Endothelial cell of umbilical vein (primary cell): ENCODE measurements at regions of chr20 and their contacts with region 1.

Region 1: DNA sequence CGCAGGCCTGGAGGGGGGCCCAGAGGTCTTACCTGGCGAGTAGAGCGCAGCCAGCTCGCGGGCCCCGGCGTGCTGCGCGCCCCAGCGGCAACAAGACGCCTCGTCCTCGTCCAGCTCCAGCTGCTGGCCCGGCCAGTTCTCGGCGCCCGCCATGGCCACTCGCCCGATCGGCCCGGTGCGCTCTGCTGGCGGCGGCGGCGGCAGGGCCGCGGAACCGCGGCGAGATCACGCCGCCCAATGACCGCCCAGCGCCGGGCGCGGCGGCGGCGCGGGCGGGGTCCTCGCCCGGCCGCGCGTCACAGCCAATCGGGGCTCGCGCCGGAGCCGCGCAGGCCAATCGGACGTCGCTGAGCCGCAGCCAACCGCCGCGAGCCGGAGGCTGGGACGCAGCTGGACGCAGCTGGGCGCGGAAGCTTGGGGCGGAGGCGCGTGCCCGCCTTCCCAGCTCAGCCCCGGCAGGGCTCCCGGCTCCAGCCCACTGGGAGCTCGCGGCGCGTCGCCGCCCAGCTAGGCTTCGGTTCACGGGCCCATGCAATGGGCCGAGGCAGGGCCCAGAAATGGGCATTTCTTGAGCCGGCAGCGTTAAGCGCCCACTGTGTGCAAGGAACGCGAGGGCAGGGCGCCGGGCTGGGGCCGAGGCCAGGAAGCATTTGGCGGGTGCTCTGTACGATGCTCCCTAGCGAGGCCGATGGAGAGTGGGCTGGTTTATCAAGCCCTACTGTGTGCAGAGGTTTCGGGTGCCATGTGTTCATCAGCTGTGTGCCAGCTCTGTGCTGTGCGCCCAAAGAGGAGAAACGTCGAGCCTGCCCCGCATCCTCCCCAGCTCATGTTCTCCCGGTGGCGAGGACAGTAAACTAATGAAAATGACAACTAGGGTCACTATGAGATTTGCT is at the start of gene PEDS1:
- DNase-seq: peak; percentile 88
- H3K4me3 ChIP-seq: peak within 1 kb of the TSS; percentile 53 to 86 (median 80)
- H3K27ac ChIP-seq: peak within 1 kb of the TSS; percentile 77
- H3K4me1 ChIP-seq: peaks cover 39% of the 10 kb centered on the region
- H3K27me3 ChIP-seq: no peaks in the 10 kb centered on the region
- CTCF ChIP-seq: no peak
- POLR2A ChIP-seq: peak; percentile 90
- total RNA-seq, gene PEDS1: 62.7 and 71.9 TPM in 2 replicates

Region 2: DNA sequence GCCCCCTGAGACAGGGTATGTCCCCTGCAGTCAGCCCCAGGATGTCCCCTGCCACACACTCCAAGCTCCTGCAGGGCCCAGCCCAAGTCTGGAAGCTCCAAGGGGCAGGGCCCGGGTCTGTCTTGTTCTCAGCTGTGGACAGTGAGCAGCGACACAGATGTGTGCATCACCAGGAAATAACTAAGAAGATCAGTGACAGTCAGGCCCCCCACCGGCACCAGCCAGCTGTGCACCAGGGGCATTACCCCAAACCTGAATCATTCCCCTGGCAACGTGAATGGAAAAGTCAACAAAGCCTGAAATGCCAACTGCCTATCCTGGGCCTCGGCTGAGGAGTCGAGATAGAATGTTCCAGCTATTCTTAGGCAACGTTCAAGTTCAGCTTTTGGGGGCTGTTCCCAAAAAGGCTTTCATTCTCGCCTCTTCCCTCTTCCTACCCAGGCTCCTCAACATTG is 1431.0 kb before region 1 on chr20:
- CTCF ChIA-PET with region 1: no interaction called
- POLR2A ChIA-PET with region 1: no interaction called
- dilution Hi-C with region 1: no loop called
- intact Hi-C with region 1: loop called (anchors 5 kb)
- DNase-seq: peak; percentile 33
- H3K4me3 ChIP-seq: no peak overlapping the region
- H3K27ac ChIP-seq: peak overlapping the region; percentile 90
- H3K4me1 ChIP-seq: peaks cover 42% of the 10 kb centered on the region
- H3K27me3 ChIP-seq: no peaks in the 10 kb centered on the region
- CTCF ChIP-seq: no peak
- POLR2A ChIP-seq: no peak

Region 3: GRCh38 chr20:49668181-49668877 is 485.4 kb before region 1 on chr20:
- CTCF ChIA-PET with region 1: no interaction called
- POLR2A ChIA-PET with region 1: no interaction called
- dilution Hi-C with region 1: no loop called
- intact Hi-C with region 1: no loop called
- DNase-seq: no peak
- H3K4me3 ChIP-seq: no peak overlapping the region
- H3K27ac ChIP-seq: no peak overlapping the region
- H3K4me1 ChIP-seq: no peaks in the 10 kb centered on the region
- H3K27me3 ChIP-seq: no peaks in the 10 kb centered on the region
- CTCF ChIP-seq: no peak
- POLR2A ChIP-seq: no peak

Region 4: GRCh38 chr20:49846206-49846807 is 307.4 kb before region 1 on chr20:
- CTCF ChIA-PET with region 1: no interaction called
- POLR2A ChIA-PET with region 1: no interaction called
- dilution Hi-C with region 1: no loop called
- intact Hi-C with region 1: no loop called
- DNase-seq: peak; percentile 48
- H3K4me3 ChIP-seq: no peak overlapping the region
- H3K27ac ChIP-seq: no peak overlapping the region
- H3K4me1 ChIP-seq: no peaks in the 10 kb centered on the region
- H3K27me3 ChIP-seq: no peaks in the 10 kb centered on the region
- CTCF ChIP-seq: peak; percentile 41 to 56
- POLR2A ChIP-seq: no peak

Region 5: GRCh38 chr20:50095476-50096078 is 58.2 kb before region 1 on chr20:
- CTCF ChIA-PET with region 1: no interaction called
- POLR2A ChIA-PET with region 1: no interaction called
- dilution Hi-C with region 1: no loop called
- intact Hi-C with region 1: no loop called
- DNase-seq: no peak
- H3K4me3 ChIP-seq: no peak overlapping the region
- H3K27ac ChIP-seq: no peak overlapping the region
- H3K4me1 ChIP-seq: peaks cover 4% of the 10 kb centered on the region
- H3K27me3 ChIP-seq: no peaks in the 10 kb centered on the region
- CTCF ChIP-seq: no peak
- POLR2A ChIP-seq: no peak

Region 6: DNA sequence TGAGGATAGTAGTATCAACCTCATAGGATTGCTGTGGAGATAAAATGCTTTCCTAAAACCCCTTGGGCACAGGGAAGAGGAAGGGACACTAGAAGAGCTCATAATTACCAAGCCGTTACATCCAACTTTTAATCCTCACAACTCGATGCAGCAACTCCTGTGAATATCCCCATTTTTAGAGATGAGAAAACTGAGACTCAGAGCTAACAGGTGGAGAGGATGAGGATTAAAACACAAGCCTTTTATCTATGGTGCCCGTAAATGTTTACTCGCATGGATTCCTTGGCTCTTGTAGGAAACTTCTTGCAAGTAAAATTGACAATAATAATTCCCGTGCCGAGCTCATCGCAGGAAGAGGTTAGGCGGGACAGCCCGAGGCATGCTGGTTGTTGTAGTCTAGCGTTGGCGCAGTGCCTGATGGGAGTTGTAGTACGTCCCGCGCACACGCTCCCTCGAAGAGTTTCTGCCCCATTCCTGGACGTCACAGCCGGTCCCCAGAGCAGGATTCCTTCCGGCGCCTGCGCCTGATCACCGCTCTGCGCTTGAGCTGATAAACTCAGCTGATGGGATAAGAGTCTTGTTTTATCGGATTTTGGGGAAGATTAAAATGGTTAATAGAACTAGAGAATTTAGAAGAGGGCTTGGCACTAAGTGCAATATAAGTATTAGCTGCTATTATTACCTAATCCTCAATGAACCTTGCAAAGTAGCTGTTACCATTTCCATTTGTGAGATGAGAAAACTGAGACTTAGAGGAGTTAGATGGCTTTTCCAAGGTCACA is 37.9 kb before region 1 on chr20:
- CTCF ChIA-PET with region 1: interaction called, 41 read pairs
- POLR2A ChIA-PET with region 1: interaction called, 6 read pairs
- dilution Hi-C with region 1: no loop called
- intact Hi-C with region 1: loop called (anchors 5 kb)
- DNase-seq: peak; percentile 98
- H3K4me3 ChIP-seq: peak overlapping the region; percentile 51 to 80 (median 63)
- H3K27ac ChIP-seq: peak overlapping the region; percentile 30
- H3K4me1 ChIP-seq: peaks cover 34% of the 10 kb centered on the region
- H3K27me3 ChIP-seq: no peaks in the 10 kb centered on the region
- CTCF ChIP-seq: no peak
- POLR2A ChIP-seq: peak; percentile 79

Region 7: DNA sequence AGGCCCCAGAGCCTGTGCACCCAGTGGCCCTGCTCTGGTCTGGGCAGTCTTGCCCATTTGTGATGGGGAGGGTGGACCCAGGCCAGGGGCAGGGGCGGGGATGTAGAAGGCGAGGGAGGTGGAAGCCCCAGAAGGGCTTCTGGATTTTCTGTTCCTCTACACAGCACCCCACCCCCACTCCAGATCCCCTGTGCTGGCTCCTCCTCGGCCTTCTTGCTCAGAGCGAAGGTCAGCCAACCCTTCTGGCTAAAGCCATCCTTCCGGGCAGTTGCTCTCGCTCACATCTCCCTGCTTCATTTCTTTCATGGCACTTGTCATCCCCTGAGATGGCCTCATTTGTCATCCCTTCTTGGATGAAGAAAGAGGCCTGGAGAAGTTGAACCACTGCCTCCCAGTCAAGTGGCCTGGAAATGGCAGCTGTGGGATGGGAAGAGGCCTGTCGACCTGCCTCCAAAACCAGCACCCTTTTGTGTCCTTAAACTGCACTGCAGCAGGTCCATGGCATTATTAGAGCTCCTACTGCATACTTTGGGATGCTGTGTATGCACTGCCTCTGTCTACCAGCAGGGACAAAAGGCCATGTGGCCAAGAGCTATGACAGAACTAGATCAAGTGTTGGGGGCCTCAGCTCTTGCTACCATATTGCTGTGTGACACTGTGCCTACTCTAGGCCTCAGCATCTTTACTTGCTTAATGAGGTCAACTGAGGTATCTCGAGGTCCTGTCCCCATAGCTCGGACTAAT is 20.1 kb before region 1 on chr20:
- CTCF ChIA-PET with region 1: interaction called, 14 read pairs
- POLR2A ChIA-PET with region 1: no interaction called
- dilution Hi-C with region 1: no loop called
- intact Hi-C with region 1: no loop called
- DNase-seq: no peak
- H3K4me3 ChIP-seq: no peak overlapping the region
- H3K27ac ChIP-seq: no peak overlapping the region
- H3K4me1 ChIP-seq: peaks cover 7% of the 10 kb centered on the region
- H3K27me3 ChIP-seq: no peaks in the 10 kb centered on the region
- CTCF ChIP-seq: peak; percentile 21 to 25
- POLR2A ChIP-seq: no peak

Region 8: DNA sequence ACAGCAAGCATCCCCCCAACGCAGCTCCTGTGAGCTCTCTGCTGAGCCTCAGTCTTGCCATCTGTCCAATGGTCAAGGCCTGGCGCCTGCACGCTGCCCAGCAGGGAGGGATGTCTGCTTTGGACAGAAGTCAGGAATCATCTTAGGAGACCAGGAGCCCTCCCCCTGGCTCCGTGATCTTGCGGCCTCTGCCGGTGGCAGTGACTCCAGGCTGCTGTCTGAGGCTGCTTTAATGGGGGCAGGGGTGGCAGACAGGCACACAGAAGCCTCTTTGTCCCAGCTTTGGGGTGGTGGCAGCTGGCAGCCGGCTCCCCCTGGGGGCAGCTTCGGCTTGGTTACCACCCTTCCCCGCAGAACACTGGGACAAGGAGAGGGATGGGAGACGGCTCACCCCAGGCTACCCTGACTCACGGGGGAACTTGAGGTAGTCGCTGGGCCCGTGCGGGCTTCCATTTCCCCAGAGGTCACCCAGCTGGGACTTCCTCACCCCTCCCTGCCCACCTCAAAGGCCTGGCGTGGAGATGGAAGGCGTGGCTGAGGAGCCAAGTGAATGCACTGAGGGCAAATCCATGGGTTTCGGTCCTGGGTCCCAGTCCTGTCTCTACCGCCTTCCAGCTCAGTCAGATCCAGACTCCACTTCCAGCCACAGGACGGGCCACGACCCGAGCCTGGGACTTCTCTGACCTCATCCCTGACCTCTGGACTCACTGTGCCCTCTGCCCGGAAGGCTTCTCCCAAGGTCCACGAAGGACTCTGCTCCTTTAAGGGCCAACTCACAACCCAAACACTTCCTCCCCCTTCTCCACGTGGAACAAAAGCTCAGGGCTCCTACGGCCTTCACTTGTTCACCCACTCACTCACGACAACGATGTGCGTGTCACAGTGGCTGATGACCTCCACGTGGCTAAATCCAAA is 15.0 kb before region 1 on chr20:
- CTCF ChIA-PET with region 1: interaction called, 14 read pairs
- POLR2A ChIA-PET with region 1: interaction called, 3 read pairs
- dilution Hi-C with region 1: no loop called
- intact Hi-C with region 1: no loop called
- DNase-seq: no peak
- H3K4me3 ChIP-seq: no peak overlapping the region
- H3K27ac ChIP-seq: peak overlapping the region; percentile 3
- H3K4me1 ChIP-seq: peaks cover 39% of the 10 kb centered on the region
- H3K27me3 ChIP-seq: no peaks in the 10 kb centered on the region
- CTCF ChIP-seq: peak in 1 of 2 donors; percentile 21
- POLR2A ChIP-seq: no peak

Region 9: DNA sequence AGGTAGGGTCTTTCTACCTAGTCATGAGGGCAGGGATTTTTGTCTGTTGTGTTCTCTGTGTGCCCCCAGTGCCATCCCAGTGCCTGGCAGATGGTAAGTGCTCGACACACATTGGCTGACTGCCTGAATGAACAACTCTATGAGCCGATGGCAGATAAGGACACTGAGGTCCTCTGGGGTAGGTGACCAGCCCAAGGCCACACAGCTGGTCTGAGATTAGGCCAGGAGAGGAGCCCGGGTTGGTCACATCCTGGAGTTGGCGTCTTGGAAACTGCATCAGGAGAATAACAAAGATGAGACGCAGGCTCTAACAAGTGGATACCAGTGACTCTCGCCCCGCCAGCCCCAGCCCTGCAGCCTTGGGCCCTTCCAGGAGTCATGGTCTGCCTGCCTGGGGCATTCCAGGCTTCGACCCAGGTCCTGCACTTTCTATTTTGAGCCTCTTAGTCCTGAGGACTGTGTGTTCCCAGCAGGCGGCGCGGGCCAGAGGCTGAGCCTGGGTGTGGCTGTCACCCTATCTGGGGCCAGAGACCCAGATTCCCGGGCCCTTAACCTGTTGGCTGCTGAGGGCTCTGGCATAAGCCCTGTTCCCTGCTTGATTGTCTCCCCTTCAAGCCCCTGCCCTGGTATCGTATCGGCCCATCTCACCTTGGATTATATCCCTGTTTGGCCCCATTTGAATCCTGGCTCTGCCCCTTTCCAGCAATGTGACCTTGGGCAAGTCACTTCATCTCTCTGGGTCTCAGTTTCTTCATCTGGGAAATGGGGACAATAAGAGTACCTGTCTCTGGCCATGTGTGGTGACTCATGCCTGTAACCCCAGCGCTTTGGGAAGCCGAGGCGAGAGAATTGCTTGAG is 125.2 kb after region 1 on chr20:
- CTCF ChIA-PET with region 1: no interaction called
- POLR2A ChIA-PET with region 1: no interaction called
- dilution Hi-C with region 1: no loop called
- intact Hi-C with region 1: no loop called
- DNase-seq: no peak
- H3K4me3 ChIP-seq: no peak overlapping the region
- H3K27ac ChIP-seq: no peak overlapping the region
- H3K4me1 ChIP-seq: peaks cover under 1% of the 10 kb centered on the region
- H3K27me3 ChIP-seq: no peaks in the 10 kb centered on the region
- CTCF ChIP-seq: no peak
- POLR2A ChIP-seq: no peak